ENCODE measurements at regions of chr7 and their contacts with region 1.

Region 1: GRCh38 chr7:105759670-105760550 is 116.5 kb downstream of the ATXN7L1 start:
- DNase-seq: peak; percentile 32
- ATAC-seq: peak; percentile 21
- H3K4me3 Mint-ChIP-seq: no peak overlapping the region
- H3K27ac Mint-ChIP-seq: no peak overlapping the region
- H3K4me1 Mint-ChIP-seq: peaks cover 29% of the 10 kb centered on the region
- H3K27me3 Mint-ChIP-seq: no peaks in the 10 kb centered on the region

Region 2: GRCh38 chr7:105185290-105186010 is 574.5 kb before region 1 on chr7:
- CTCF ChIA-PET with region 1: no interaction called
- POLR2A ChIA-PET with region 1: no interaction called
- DNase-seq: no peak
- ATAC-seq: no peak
- H3K4me3 Mint-ChIP-seq: no peak overlapping the region
- H3K27ac Mint-ChIP-seq: no peak overlapping the region
- H3K4me1 Mint-ChIP-seq: no peaks in the 10 kb centered on the region
- H3K27me3 Mint-ChIP-seq: no peaks in the 10 kb centered on the region

Region 3: DNA sequence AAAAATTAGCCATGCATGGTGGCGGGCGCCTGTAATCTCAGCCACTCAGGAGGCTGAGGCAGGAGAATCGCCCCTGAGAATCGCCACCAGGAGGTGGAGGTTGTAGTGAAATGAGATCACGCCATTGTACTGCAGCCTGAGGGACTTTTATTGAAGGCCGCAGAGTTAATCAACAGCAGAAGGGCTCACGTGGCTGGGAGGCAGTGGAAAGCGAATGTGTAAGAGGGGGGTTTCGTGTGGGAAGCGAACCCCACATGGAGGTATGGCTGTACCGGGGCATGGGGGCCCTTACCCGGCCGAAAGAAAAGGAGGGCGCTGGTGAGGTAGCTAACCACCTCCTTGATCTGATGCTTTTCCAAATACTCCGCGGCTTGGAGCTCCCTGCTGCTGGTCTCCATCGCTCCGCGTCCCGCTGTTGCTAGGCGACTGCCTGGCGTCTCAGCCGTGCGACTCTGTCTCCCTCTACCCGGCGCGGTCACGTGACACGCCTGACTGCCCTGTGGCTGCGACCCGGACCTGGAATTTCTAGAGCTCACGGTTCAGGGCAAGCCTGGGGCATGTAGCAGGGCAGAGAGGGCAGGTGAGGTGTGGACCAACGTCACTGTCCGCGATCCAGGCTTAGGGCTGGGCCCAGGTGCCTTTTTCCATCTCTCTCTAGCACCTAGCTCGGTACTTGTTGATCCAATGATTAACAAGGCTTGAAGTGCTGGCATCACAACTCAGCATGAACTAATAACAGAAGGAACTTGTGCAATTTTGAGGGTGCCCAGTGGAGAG is 178.7 kb before region 1 on chr7 and contains the start of gene EFCAB10:
- CTCF ChIA-PET with region 1: no interaction called
- POLR2A ChIA-PET with region 1: no interaction called
- DNase-seq: peak; percentile 69
- ATAC-seq: peak; percentile 88
- H3K4me3 Mint-ChIP-seq: peak within 1 kb of the TSS; percentile 72
- H3K27ac Mint-ChIP-seq: no peak within 1 kb of the TSS
- H3K4me1 Mint-ChIP-seq: peaks cover 11% of the 10 kb centered on the region
- H3K27me3 Mint-ChIP-seq: no peaks in the 10 kb centered on the region
- total RNA-seq, gene EFCAB10: not detected

Region 4: DNA sequence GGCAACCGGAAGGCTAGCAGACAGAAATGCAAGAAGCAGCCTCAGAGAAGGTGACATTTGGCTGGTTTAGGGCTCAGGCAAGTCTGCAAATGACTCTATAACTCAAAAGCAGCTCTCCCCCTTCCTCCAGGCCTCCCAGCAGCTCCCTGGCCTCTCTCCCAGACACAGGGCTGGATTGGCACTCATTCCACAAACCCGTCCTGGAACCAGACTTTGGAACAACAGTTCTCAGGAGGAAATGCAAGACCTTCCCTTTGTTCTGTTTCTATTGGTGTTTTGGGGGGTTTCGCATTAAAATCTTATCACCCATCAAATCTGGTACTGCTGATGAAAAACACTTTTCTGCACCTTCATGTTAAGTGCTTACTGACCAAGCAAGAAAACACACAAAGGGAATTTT is 138.3 kb before region 1 on chr7:
- CTCF ChIA-PET with region 1: no interaction called
- POLR2A ChIA-PET with region 1: no interaction called
- DNase-seq: no peak
- ATAC-seq: no peak
- H3K4me3 Mint-ChIP-seq: no peak overlapping the region
- H3K27ac Mint-ChIP-seq: no peak overlapping the region
- H3K4me1 Mint-ChIP-seq: no peaks in the 10 kb centered on the region
- H3K27me3 Mint-ChIP-seq: no peaks in the 10 kb centered on the region

Region 5: DNA sequence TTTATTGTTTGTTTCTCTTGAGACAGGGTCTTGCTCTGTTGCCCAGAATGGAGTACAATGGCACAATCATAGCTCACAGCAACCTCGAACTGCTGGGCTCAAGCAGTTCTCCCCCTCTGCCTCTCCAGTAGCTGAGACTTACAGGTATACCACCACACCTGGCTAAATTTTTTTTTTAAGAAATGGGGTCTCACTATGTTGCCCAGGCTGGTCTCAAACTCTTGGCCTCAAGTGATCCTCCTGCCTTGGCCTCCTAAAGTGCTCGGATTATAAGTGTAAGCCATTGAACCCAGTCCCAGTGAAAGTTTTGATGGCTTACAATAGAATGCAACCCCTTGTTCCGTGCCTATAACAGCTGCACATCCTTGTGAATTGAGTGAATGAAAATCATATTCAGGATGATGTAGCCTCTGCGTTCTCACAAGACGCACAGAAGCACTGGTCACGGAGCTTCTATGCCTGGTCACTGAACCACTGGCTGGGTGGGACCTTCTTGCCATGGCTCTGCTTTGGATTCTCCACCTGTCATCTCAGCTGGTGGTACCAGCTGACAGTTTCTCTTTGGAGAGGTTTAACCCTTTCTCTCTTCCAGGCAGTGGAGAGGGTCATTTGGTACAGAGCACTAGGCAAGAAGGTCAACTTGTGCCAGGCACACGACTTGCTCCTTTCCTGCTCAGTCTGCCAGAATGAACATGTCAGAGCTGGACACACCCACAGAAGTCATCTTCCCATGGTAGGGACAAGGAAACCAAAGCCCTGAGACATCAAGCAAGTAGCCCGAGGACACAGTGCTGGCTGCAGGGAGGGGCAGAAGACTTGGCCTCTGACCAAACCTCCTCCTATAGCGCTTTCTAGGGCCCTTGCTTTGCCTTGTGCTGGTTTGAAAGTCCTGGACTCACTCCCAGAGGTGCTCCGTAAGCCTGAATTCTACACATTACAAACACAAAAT is 26.9 kb after region 1 on chr7:
- CTCF ChIA-PET with region 1: interaction called, 10 read pairs
- POLR2A ChIA-PET with region 1: no interaction called
- DNase-seq: no peak
- ATAC-seq: no peak
- H3K4me3 Mint-ChIP-seq: no peak overlapping the region
- H3K27ac Mint-ChIP-seq: no peak overlapping the region
- H3K4me1 Mint-ChIP-seq: peaks cover 11% of the 10 kb centered on the region
- H3K27me3 Mint-ChIP-seq: peaks cover 10% of the 10 kb centered on the region

Region 6: DNA sequence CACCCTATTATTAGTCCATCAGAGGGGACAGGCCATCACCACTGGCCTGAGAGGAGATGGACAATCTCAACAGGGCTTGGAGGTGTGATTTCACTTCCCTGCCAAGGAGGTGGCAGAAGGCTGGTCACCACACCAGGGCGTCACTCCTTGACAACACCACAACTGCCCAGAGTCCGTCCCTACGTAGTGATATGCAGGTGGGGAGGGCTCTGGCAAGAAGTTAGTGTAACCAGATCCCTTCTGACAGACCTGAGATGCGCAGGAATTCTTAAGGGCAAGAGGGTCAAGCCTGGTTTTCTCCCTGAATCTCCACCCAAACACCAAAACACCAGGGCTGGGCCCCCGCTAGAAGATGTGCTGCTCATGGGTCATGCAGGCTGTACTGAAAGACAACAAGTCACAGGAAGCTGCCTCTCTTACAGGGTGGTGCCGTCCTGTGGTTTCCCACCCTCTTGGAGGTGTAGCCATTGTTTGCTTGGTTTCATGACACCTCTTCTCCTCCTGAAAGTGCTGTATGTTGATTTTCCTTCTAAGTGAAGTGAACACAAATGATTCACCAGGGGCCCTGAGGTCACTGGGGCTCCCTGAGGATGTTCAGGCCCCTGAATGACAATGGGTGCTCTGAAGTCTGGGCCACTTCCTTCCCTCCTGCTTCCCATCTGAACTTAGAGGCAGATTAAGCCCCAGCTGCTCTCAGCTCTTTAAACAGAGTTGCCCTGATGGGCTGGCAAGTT is 89.4 kb after region 1 on chr7:
- CTCF ChIA-PET with region 1: interaction called, 25 read pairs
- POLR2A ChIA-PET with region 1: no interaction called
- DNase-seq: peak; percentile 81
- ATAC-seq: peak; percentile 94
- H3K4me3 Mint-ChIP-seq: peak overlapping the region; percentile 49
- H3K27ac Mint-ChIP-seq: peak overlapping the region; percentile 91
- H3K4me1 Mint-ChIP-seq: peaks cover 49% of the 10 kb centered on the region
- H3K27me3 Mint-ChIP-seq: peaks cover 3% of the 10 kb centered on the region

Region 7: DNA sequence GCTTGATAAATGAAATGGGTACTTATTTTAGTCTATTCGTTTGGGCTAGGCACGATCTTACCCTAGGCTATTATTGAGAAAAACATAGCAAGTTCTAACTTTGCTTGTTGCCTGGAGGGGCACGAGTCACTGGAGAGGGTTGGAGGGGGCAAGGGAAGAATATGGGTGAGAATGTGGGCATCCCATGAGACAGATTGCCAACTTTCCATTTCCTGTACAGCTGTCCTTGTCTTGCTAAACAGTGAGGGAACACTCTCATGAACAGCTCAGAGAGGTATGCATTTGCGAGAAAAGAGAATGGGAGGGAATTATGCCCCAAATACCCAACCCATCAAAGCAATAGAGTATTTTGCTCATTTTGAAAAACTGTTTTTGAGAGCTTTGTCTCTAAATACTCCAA is 212.4 kb after region 1 on chr7:
- CTCF ChIA-PET with region 1: no interaction called
- POLR2A ChIA-PET with region 1: no interaction called
- DNase-seq: no peak
- ATAC-seq: no peak
- H3K4me3 Mint-ChIP-seq: no peak overlapping the region
- H3K27ac Mint-ChIP-seq: no peak overlapping the region
- H3K4me1 Mint-ChIP-seq: no peaks in the 10 kb centered on the region
- H3K27me3 Mint-ChIP-seq: no peaks in the 10 kb centered on the region

Region 8: GRCh38 chr7:106009403-106010226 is 249.7 kb after region 1 on chr7:
- CTCF ChIA-PET with region 1: interaction called, 18 read pairs
- POLR2A ChIA-PET with region 1: no interaction called
- DNase-seq: peak; percentile 80
- ATAC-seq: peak; percentile 100
- H3K4me3 Mint-ChIP-seq: no peak overlapping the region
- H3K27ac Mint-ChIP-seq: no peak overlapping the region
- H3K4me1 Mint-ChIP-seq: peaks cover 12% of the 10 kb centered on the region
- H3K27me3 Mint-ChIP-seq: peaks cover 19% of the 10 kb centered on the region

Region 9: DNA sequence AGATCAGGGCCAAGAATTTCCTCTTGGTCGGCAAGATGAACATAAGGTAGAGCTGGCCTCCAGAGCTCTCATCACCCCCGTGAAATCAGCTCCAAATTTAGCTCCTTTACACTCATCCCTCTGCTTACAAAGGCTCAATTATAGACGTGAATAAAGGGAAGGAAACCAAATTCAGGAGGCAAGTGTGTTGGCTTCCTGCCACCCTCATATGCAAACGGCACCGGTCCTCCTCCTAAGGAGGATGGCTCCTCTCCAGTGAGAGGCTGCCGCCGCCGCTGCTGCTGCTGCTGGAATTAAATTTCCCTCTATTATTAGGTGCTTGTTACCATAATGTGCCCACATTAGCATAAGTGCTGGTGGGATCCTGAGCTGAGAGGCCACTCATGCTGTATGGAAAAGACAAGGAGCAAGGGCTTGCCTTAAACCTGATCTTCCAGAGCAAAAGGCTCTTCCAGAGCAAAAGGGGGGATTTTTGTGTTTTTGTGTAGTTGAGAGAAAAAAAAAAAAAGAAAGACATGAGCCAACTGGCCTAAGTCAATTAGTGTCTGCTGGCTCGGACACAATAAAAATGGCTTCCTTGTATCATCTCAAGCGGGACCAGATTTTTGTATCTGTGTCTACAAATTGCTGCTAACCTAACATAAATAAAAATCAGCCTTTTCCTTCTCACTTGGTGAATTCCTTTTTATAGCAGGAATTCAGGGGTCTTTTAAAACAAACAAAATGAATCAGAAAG is 271.6 kb after region 1 on chr7:
- CTCF ChIA-PET with region 1: interaction called, 18 read pairs
- POLR2A ChIA-PET with region 1: no interaction called
- DNase-seq: no peak
- ATAC-seq: no peak
- H3K4me3 Mint-ChIP-seq: no peak overlapping the region
- H3K27ac Mint-ChIP-seq: no peak overlapping the region
- H3K4me1 Mint-ChIP-seq: no peaks in the 10 kb centered on the region
- H3K27me3 Mint-ChIP-seq: peaks cover 36% of the 10 kb centered on the region